Right ventricle myocardium superior (tissue), 1 donor: ENCODE measurements at regions of chr5 and their contacts with region 1.

Region 1: DNA sequence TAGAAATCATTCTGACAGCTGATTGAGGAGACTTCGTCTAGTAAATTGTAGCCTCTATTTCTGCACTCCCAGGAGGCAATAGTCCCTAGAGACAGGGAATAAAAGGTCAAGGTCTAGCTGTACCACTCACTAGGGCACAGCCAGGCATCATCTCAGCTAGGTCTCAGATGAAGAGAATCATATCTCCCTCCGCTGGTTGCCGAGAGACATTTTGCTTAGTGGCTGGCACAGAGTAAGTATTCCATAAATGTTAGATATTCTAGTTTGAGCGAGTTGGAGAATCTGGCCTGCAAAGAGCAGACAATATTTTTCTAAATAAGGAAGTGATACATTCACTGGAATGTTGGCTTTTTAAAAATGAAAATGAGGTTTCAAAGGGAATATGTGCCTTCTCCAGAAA is 180.4 kb upstream of the ACTBL2 start:
- DNase-seq: no peak
- ATAC-seq: peak; percentile 80

Region 2: DNA sequence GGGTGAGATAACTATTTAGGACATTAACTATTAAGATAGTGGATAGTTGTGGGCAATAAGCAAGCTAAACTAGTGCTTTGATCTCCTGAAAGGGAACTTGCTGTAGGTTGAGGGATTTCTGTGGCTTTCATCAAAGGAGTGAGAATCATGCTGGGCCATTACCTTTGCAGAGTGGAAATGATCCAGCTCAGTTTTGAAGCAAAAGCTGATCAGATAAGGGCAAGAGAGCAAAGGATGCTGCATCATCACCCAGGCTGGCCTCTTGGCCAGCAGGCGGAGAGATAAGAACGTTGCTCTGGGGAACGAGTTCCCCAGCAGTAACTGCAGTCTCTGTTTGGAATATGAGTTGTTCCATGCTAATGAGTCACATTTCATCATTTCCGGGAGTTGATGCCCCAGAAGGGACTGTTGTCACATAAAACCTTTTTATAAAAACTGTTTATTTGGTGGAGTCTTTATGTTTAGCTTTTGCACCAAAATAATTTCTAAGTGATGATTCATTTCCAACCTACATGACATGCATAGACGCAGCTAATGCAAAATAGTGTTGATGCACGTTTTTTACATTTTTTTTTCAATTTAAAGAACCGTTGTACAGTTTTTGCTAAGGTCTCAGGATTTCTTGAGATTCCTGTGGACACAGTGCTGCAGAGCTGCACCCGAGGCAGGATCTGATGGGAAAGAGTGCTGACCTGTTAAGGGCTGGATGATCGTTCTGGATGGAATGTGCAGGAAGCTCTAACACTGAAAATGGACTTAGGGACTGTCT is 279.7 kb before region 1 on chr5:
- intact Hi-C with region 1: no loop called
- DNase-seq: no peak
- ATAC-seq: peak; percentile 55

Region 3: GRCh38 chr5:57468481-57469163 is 194.4 kb before region 1 on chr5:
- intact Hi-C with region 1: no loop called
- DNase-seq: no peak
- ATAC-seq: no peak

Region 4: DNA sequence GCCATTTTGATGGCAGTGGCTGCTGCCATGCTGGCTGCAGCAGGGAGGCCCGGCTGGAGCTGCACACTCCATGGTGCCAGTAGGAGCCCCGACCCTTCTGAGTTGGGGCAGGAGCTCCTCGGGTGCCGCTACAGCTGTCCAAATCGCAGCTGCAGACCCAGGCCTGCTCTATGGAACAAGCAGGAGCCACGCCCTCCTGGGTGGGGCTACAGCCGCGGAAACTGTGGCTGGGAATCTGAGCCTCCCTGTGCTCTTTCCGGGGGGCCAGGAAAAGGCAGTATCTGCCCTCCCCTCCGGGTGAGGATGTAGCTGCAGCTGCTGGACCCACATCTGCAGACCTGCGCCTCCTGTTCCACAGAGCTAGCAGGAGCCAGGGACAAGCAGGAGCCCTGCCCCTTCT is 98.5 kb after region 1 on chr5:
- intact Hi-C with region 1: loop called (anchors 10 kb)
- DNase-seq: peak; percentile 35
- ATAC-seq: no peak